ENCODE measurements at regions of chr2 and their contacts with region 1.

Region 1: GRCh38 chr2:7014174-7014640 is 97.0 kb downstream of the RNF144A start:
- DNase-seq: peak; percentile 43
- CTCF ChIP-seq: peak; percentile 51

Region 2: DNA sequence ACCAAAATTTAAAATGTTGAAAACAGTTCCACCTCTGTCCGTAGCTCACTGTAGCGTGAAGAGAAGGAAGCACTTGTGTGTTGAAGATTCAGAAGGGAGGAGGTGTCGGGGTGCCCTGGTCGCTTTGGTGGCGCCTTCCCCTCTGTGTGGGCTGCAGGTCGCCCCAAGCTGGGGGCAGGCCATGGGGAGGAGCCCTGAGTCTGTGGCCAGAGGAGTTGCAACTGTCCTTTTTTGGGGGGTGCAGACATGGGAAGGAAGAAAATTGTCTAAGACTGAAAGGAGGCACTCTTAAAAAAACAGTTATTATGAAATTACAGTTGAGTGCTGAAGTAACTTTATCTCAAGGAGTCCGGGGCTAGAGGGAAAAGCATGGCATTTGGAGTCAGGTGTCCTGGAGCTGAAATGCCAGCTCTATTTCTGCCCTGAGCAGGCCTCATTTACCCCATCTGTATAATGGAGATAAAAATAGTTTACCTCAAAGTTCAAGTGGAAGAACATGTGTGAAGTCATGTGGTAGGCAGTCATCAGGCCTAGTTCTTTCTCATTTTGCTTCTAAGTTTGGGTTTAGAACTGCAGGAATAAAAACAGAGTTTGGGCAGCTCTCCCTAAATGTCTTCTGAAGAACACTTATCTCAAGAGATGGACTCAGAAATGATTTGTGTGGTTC is 14.9 kb before region 1 on chr2:
- CTCF ChIA-PET with region 1: interaction called, 77 read pairs
- POLR2A ChIA-PET with region 1: no interaction called
- DNase-seq: peak; percentile 60
- CTCF ChIP-seq: no peak